CD8-positive, alpha-beta T cell (primary cell): ENCODE measurements at regions of chr12 and their contacts with region 1.

Region 1: DNA sequence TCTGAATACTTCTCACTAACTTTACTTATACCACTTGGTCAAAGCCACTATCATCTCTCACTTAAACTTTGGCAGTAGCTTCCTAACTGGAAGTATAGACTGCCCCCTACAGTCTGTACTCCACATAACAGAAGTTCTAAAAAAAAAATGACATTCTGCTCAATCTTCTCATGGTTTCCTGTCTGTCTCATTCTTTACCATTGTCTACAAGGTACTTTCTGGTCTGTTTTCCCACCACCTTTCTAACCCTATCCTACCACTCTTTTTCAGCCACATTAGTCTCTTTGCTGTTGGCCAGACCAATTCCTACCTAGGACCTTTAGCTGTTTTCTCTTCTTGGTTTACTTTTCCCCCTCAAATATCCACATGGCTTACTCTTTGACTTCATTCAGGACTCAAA is 14.7 kb downstream of the CPSF6 start:
- DNase-seq: peak in 2 of 9 experiments; percentile 76 to 84
- ATAC-seq: peak; percentile 93
- H3K4me3 ChIP-seq: no peak overlapping the region
- H3K4me3 Mint-ChIP-seq: no peak overlapping the region
- H3K27ac ChIP-seq: peak overlapping the region in 1 of 2 experiments; percentile 32
- H3K27ac Mint-ChIP-seq: peak overlapping the region; percentile 82
- H3K4me1 ChIP-seq: peaks cover 13% of the 10 kb centered on the region
- H3K4me1 Mint-ChIP-seq: peaks cover 47% of the 10 kb centered on the region
- H3K27me3 ChIP-seq: no peaks in the 10 kb centered on the region
- H3K27me3 Mint-ChIP-seq: no peaks in the 10 kb centered on the region
- CTCF ChIP-seq: peak; percentile 77

Region 2: DNA sequence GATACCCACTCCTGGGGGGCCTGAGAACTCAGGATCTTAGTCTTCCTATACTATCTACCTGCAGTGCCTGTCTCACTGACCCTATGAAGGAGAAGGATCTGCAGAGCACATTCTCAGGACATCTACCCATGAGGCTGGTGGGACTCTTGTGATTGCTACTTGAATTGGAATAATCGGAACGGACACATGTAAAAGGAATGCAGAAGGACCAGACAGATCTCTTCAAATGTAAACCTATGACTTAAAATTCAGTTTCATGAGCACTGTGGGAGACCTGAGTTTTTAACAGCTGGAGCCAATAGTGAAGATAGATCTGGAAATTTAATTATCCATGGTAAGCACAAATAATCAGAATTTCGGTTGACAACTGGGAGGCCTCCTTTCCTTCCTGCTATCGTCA is 49.9 kb before region 1 on chr12:
- CTCF ChIA-PET with region 1: no interaction called
- POLR2A ChIA-PET with region 1: no interaction called
- intact Hi-C with region 1: no loop called
- DNase-seq: no peak
- ATAC-seq: no peak
- H3K4me3 ChIP-seq: no peak overlapping the region
- H3K4me3 Mint-ChIP-seq: no peak overlapping the region
- H3K27ac ChIP-seq: no peak overlapping the region
- H3K27ac Mint-ChIP-seq: no peak overlapping the region
- H3K4me1 ChIP-seq: no peaks in the 10 kb centered on the region
- H3K4me1 Mint-ChIP-seq: no peaks in the 10 kb centered on the region
- H3K27me3 ChIP-seq: no peaks in the 10 kb centered on the region
- H3K27me3 Mint-ChIP-seq: no peaks in the 10 kb centered on the region
- CTCF ChIP-seq: no peak

Region 3: DNA sequence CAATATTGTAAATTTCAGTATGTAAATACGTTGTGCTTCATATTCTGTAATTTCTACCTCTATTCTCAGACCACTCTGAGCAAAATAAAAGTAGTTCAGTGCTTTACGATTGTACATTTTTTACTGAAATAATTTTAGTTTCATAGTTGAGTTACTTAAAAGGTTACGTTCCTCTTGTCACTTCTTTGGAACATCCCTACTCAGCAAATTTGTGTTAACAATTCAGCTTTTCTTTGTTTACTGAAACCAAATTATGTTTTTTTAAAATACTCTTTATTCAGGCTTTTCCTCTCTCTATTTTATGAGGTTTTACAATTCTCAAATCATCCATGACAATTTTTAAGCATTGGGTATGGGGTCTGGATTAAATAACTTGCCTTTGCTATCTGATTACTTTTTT is 11.2 kb after region 1 on chr12:
- CTCF ChIA-PET with region 1: interaction called, 11 read pairs
- POLR2A ChIA-PET with region 1: no interaction called
- intact Hi-C with region 1: no loop called
- DNase-seq: no peak
- ATAC-seq: no peak
- H3K4me3 ChIP-seq: no peak overlapping the region
- H3K4me3 Mint-ChIP-seq: no peak overlapping the region
- H3K27ac ChIP-seq: no peak overlapping the region
- H3K27ac Mint-ChIP-seq: no peak overlapping the region
- H3K4me1 ChIP-seq: no peaks in the 10 kb centered on the region
- H3K4me1 Mint-ChIP-seq: peaks cover 4% of the 10 kb centered on the region
- H3K27me3 ChIP-seq: no peaks in the 10 kb centered on the region
- H3K27me3 Mint-ChIP-seq: no peaks in the 10 kb centered on the region
- CTCF ChIP-seq: no peak